Heart right ventricle (tissue), 16 donors: ENCODE measurements at regions of chr11 and their contacts with region 1.

Region 1: GRCh38 chr11:65625628-65626342 is 10.2 kb downstream of the PCNX3 start:
- DNase-seq: peak; percentile 54 to 69
- ATAC-seq: peak; percentile 51 to 84 (median 78)
- H3K4me3 ChIP-seq: no peak overlapping the region
- H3K27ac ChIP-seq: peak overlapping the region in 1 of 10 donors; percentile 9
- H3K4me1 ChIP-seq: peaks cover 0 to 22% (median 7%) of the 10 kb centered on the region in 9 donors
- H3K27me3 ChIP-seq: no peaks in the 10 kb centered on the region
- CTCF ChIP-seq: peak; percentile 54 to 75 (median 69)

Region 2: DNA sequence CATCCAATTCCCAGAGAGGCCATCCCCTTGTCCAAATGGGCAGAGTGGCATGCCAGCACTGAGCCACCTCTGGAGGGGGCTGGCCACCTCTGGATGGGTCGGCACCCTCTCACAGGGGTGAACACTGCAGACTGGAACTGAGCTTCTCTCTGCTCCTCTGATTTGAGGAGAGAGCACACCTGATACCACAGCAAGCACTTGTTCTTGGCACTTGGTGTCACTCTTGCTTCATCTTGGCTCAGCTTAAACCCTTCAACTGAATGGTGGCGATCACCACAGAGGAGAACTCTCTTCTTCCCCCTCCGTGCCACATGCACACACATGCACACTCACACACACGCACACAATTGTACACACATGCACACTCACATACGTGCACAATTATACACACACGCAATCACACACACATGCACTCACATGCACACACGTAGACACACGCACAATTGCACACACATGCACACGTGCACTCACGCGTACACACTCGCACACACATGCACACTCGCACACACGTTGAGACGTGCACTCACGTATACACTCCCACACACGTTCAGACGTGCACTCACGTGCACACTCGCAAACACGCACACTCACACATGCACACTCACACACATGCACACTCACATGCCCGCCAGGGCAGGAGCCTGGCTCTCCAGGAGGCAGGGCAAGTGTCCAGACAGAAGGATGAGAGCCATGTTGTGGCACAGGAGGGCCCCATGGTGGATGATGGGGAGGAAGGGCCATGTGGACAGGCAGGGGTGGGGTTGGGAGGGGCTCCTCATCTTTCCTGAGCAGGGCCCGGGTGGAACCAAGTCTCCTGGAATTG is 184.5 kb after region 1 on chr11:
- intact Hi-C with region 1: loop called in 3 of 10 experiments (anchors 5 to 10 kb)
- DNase-seq: no peak
- ATAC-seq: peak in 3 of 8 donors; percentile 18 to 27 (median 23)
- H3K4me3 ChIP-seq: no peak overlapping the region
- H3K27ac ChIP-seq: no peak overlapping the region
- H3K4me1 ChIP-seq: peaks cover 0 to 23% (median 5%) of the 10 kb centered on the region in 9 donors
- H3K27me3 ChIP-seq: peaks cover 0 to 46% (median 18%) of the 10 kb centered on the region in 7 donors
- CTCF ChIP-seq: no peak